Keratinocyte (primary cell): ENCODE measurements at regions of chr1 and their contacts with region 1.

Region 1: DNA sequence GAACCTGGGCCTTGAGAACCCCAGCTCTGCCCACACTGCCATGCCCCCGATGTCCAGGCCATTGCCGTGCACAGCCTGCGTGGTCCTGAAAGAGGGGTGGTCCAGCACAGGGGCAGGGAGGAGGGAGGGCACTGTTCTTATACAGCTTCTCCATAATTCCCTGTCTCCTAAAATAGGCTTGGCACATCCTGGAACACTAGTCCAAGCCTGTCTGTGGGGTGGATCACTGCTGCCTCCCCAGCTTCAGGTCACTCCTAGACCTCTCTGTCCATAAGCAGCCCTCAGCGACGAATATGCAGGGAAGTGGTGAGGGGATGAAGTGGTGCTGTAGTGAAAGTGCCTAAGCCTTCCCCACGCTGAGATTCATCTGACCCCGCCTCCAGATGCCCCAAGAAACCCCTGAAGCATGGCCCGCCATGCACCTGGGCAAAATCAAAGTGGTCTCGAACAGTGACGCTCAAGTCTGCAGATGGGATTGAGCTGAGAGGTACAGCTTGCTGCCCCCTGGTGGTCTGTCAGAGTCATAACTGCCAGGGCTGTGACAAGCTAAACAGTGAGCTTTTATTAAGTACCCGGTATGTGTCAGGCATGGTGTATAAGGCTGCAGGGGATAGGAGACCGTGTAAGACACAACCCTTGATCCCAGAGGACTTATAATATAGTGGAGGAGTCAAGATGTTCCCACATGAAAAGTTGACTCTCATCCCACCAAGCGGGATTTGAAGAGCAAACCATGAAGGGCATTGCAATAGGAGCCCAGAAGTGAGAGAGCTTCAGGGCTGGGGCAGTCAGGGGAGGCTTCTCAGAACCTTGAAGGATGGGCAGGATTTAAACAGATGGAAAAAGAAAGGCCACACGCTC is 66.6 kb downstream of the FAM163A start:
- DNase-seq: peak; percentile 32
- H3K4me3 ChIP-seq: no peak overlapping the region
- H3K27ac ChIP-seq: no peak overlapping the region
- H3K4me1 ChIP-seq: peaks cover 7% of the 10 kb centered on the region
- H3K27me3 ChIP-seq: peaks cover 16% of the 10 kb centered on the region
- CTCF ChIP-seq: peak; percentile 88 to 97 (median 93)

Region 2: DNA sequence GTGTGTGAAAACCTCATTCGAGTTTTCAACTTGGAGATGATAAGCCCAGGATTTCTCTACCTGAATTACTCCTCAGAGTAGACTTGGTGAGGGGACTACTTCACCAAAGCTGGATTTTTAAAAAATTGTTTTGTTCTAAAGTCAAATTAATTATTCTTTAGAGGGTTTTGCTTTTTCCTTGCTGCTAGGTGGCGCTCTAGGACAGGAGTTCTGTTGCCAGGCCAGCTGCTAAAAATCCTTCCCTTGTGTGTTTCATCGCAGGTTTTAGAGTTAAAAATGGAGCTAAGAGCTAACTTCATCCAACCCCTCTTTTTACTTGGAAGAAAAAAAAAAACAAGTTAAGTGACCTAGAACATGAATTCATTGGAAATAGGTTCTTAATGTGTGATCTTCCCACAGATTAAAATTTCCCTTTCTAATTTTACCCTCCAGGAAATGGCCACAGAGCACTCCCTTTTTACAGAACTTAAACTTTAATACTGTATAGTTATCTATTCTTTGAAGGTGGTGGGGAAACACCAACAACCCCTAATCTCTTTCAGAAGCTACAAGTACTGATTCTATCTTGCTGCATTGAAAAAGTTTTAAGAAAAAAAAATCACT is 103.3 kb before region 1 on chr1:
- dilution Hi-C with region 1: loop called (anchors 25 kb)
- DNase-seq: peak; percentile 9
- H3K4me3 ChIP-seq: no peak overlapping the region
- H3K27ac ChIP-seq: no peak overlapping the region
- H3K4me1 ChIP-seq: no peaks in the 10 kb centered on the region
- H3K27me3 ChIP-seq: no peaks in the 10 kb centered on the region
- CTCF ChIP-seq: peak; percentile 64 to 69 (median 68)